ENCODE measurements at regions of chr1 and their contacts with region 1.

Region 1: GRCh38 chr1:202888531-202889360 is at the start of gene RABIF:
- DNase-seq: peak; percentile 96
- H3K4me3 ChIP-seq: peak within 1 kb of the TSS; percentile 78
- H3K27ac ChIP-seq: peak within 1 kb of the TSS; percentile 88
- H3K4me1 ChIP-seq: peaks cover 14% of the 10 kb centered on the region
- CTCF ChIP-seq: no peak
- total RNA-seq, gene RABIF: 5.2 and 7.8 TPM in 2 replicates

Region 2: GRCh38 chr1:202957733-202958543 is 69.2 kb after region 1 on chr1 and contains the start of gene ADIPOR1:
- CTCF ChIA-PET with region 1: no interaction called
- POLR2A ChIA-PET with region 1: no interaction called
- intact Hi-C with region 1: loop called (anchors 5 kb)
- DNase-seq: peak; percentile 92
- H3K4me3 ChIP-seq: peak within 1 kb of the TSS; percentile 95
- H3K27ac ChIP-seq: peak within 1 kb of the TSS; percentile 31
- H3K4me1 ChIP-seq: peaks cover 14% of the 10 kb centered on the region
- CTCF ChIP-seq: no peak
- total RNA-seq, gene ADIPOR1: 49.4 and 55.2 TPM in 2 replicates

Region 3: DNA sequence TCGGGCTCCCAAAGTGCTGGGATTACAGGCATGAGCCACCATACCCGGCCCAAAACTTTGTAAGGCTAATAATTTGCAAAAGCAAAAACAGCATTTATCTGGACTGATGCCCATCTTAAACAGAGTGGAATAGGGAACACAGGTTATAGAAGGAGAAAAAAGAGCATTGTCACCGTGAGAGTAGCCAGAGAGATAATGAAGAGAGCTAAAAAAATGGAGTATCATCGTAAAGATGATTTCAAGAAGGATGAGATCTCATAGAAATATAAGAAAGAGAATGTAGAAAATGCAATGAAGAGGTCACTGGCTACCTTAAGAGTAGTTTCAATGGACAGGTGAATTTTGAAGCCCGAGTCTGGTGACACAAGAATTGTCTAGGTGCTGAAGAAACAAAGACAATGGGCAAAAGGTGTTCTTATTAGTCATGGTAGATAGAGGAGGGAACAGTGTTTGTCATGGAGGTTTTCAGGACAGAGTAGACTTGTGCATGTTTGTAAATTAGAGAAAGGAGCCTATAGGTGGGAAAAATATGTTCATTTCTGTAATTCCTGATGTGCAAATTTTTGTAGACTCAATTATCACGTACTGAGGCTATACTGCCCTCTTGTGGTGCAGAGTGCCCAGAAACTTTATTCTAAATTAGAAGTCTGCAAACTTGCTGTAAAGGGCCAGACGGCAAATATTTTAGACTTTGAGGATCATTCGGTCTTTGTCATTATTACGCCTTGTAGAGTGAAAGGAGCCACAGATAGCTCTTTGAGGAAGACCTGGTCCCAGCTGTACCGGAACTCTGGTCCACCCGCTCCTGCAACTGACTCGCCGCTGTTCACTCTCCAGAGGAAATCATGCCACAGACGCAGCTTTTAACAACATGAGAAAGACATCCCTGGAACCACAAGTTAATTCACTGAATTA is 110.3 kb after region 1 on chr1:
- CTCF ChIA-PET with region 1: no interaction called
- POLR2A ChIA-PET with region 1: no interaction called
- intact Hi-C with region 1: loop called (anchors 2 kb)
- DNase-seq: peak; percentile 83
- H3K4me3 ChIP-seq: peak overlapping the region; percentile 22
- H3K27ac ChIP-seq: peak overlapping the region; percentile 65
- H3K4me1 ChIP-seq: peaks cover 16% of the 10 kb centered on the region
- CTCF ChIP-seq: peak; percentile 96

Measured in OCI-LY7 (cell line).